ENCODE measurements at regions of chr4 and their contacts with region 1.

Region 1: GRCh38 chr4:53653484-53654053 is 62.3 kb upstream of the LNX1 start:
- DNase-seq: no peak
- ATAC-seq: peak in 1 of 4 donors; percentile 25
- H3K4me3 ChIP-seq: no peak overlapping the region
- H3K27ac ChIP-seq: peak overlapping the region in 7 of 12 donors; percentile 5 to 77 (median 32)
- H3K4me1 ChIP-seq: peaks cover 0 to 38% (median 17%) of the 10 kb centered on the region in 12 donors
- H3K27me3 ChIP-seq: no peaks in the 10 kb centered on the region
- CTCF ChIP-seq: peak in 3 of 12 donors; percentile 6 to 34 (median 17)
- POLR2A ChIP-seq: no peak

Region 2: GRCh38 chr4:53537606-53538005 is 116.0 kb before region 1 on chr4:
- intact Hi-C with region 1: loop called in 1 of 10 experiments (anchors 5 kb)
- DNase-seq: peak in 1 of 5 donors; percentile 32
- ATAC-seq: peak; percentile 12 to 64 (median 38)
- H3K4me3 ChIP-seq: no peak overlapping the region
- H3K27ac ChIP-seq: peak overlapping the region in 7 of 12 donors; percentile 2 to 77 (median 45)
- H3K4me1 ChIP-seq: peaks cover 0 to 37% (median 13%) of the 10 kb centered on the region in 12 donors
- H3K27me3 ChIP-seq: no peaks in the 10 kb centered on the region
- CTCF ChIP-seq: no peak
- POLR2A ChIP-seq: no peak

Region 3: DNA sequence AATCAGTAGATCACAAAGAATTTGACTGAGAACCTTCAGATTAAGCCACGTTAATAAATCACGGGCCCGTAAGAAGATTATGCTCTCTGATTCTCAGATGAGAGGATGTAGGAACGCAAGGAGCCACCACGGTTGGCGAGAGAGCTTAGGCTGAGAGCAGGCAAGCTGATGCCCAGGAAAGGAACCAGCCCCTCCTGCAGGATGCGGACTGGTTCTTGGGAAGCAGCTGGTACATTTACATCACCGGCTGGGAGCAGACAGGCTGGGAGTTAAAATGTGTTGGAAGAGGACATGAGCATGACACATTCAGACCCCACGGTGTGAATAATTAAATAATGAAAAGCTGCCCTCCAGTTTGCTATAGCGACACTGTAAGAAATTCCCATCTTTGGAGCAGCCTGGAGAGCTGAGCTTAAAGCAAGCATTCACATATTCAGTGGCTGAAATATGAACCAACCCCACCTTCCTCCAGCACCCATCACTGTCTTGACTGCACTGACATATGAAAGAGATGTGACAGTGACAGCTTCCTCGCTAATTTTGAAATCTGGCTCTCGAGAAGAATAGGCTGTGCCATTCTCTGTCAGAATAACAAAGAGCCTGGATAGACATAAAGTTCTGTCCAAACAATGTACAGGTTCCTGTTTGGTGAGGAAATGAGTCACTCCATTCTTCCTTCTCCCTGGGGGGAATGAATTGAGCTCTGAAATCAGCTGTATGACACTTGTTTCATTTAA is 95.3 kb before region 1 on chr4:
- intact Hi-C with region 1: loop called in 1 of 10 experiments (anchors 5 kb)
- DNase-seq: peak in 1 of 5 donors; percentile 31
- ATAC-seq: peak in 3 of 4 donors; percentile 62 to 66 (median 62)
- H3K4me3 ChIP-seq: peak overlapping the region in 2 of 12 donors; percentile 14 to 19
- H3K27ac ChIP-seq: peak overlapping the region in 3 of 12 donors; percentile 7 to 57 (median 16)
- H3K4me1 ChIP-seq: peaks cover 0 to 31% (median 9%) of the 10 kb centered on the region in 12 donors
- H3K27me3 ChIP-seq: no peaks in the 10 kb centered on the region
- CTCF ChIP-seq: no peak
- POLR2A ChIP-seq: no peak

Region 4: GRCh38 chr4:53618321-53618720 is 35.2 kb before region 1 on chr4:
- intact Hi-C with region 1: loop called in 1 of 10 experiments (anchors 2 kb)
- DNase-seq: no peak
- ATAC-seq: peak in 3 of 4 donors; percentile 39 to 74 (median 59)
- H3K4me3 ChIP-seq: no peak overlapping the region
- H3K27ac ChIP-seq: peak overlapping the region in 3 of 12 donors; percentile 30 to 43 (median 31)
- H3K4me1 ChIP-seq: peaks cover 0 to 10% (median 0%) of the 10 kb centered on the region in 12 donors
- H3K27me3 ChIP-seq: no peaks in the 10 kb centered on the region
- CTCF ChIP-seq: no peak
- POLR2A ChIP-seq: no peak

Region 5: GRCh38 chr4:53730031-53730805 is 76.6 kb after region 1 on chr4:
- intact Hi-C with region 1: no loop called
- DNase-seq: no peak
- ATAC-seq: no peak
- H3K4me3 ChIP-seq: no peak overlapping the region
- H3K27ac ChIP-seq: no peak overlapping the region
- H3K4me1 ChIP-seq: peaks cover 0 to 21% (median 0%) of the 10 kb centered on the region in 12 donors
- H3K27me3 ChIP-seq: no peaks in the 10 kb centered on the region
- CTCF ChIP-seq: no peak
- POLR2A ChIP-seq: no peak

Measured in heart left ventricle (tissue), 16 donors.